Common myeloid progenitor, CD34-positive (primary cell): ENCODE measurements at regions of chr1 and their contacts with region 1.

Region 1: DNA sequence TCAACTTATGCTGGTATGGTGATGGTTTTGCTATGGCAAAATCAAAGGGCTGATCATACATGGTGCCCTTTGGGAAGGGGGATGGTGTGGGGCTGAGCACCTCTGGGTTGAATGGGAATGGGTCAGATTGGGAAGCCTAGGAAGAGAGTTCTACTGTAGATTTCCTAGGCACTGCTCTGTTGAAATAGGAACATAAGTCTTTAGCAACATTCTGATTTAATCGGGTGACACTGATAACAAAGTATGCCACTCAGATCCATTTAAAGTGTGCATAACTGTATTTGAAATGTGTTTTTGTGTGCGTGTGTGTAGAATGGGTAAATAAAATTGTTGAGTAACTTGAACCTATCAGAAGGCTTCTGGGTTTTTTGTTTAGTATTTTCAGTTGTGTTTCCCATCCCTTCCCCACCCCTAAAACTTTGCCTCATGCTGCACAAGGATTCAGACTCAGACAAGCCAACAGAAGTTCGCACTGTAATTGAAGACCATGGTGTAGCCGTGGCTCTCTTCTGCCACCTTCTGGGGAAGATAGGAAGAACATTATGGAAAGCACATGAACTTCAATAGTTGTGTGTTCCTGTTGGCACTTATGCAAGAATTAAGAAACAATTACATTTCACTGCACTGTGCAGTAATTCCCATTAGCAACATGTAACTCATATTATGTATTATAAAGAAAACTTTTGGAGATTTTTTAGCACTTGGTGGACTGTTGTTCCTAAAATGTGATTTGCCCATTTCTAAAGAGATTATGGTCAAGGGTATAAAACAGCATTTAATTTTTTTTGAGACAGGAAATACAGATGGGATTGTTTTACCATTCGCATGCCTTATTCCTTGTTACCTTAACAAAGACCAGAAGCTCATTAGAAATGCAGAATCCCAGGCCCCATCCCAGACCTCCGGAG is 10.9 kb upstream of the C4BPB start:
- DNase-seq: peak; percentile 77 to 90 (median 83)
- H3K4me3 ChIP-seq: no peak overlapping the region
- H3K27ac ChIP-seq: no peak overlapping the region
- H3K4me1 ChIP-seq: peaks cover under 1 to 4% (median 2%) of the 10 kb centered on the region in 4 experiments
- H3K27me3 ChIP-seq: no peaks in the 10 kb centered on the region

Region 2: GRCh38 chr1:207045466-207045865 is 32.3 kb before region 1 on chr1:
- CTCF ChIA-PET with region 1: interaction called, 22 read pairs
- POLR2A ChIA-PET with region 1: no interaction called
- DNase-seq: no peak
- H3K4me3 ChIP-seq: no peak overlapping the region
- H3K27ac ChIP-seq: no peak overlapping the region
- H3K4me1 ChIP-seq: peaks cover 0 to 12% (median 5%) of the 10 kb centered on the region in 4 experiments
- H3K27me3 ChIP-seq: no peaks in the 10 kb centered on the region

Region 3: GRCh38 chr1:207058878-207059867 is 18.6 kb before region 1 on chr1:
- CTCF ChIA-PET with region 1: interaction called, 20 read pairs
- POLR2A ChIA-PET with region 1: interaction called, 3 read pairs
- DNase-seq: peak in 2 of 3 donors; percentile 40 to 65
- H3K4me3 ChIP-seq: peak overlapping the region in 1 of 7 experiments; percentile 42
- H3K27ac ChIP-seq: no peak overlapping the region
- H3K4me1 ChIP-seq: peaks cover 21 to 40% (median 27%) of the 10 kb centered on the region in 4 experiments
- H3K27me3 ChIP-seq: no peaks in the 10 kb centered on the region

Region 4: DNA sequence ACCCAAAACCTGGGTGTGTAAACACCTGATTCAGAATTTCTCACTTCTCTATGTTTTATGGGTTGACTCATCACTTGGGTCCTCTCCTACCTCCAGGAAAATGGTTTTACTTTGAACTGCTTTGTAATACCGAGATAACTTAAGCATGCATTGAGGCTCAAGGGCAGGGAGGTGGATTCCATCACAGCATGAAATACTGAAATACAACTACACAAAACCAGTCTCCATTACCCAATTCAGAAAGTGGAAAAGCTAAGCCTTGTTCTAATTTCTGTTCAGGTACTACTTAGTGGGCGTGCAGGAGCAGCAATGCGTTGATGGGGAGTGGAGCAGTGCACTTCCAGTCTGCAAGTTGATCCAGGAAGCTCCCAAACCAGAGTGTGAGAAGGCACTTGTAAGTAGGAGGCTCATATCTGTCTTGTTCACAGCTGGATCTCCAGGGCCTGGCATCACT is 20.2 kb after region 1 on chr1:
- CTCF ChIA-PET with region 1: no interaction called
- POLR2A ChIA-PET with region 1: no interaction called
- DNase-seq: no peak
- H3K4me3 ChIP-seq: no peak overlapping the region
- H3K27ac ChIP-seq: no peak overlapping the region
- H3K4me1 ChIP-seq: no peaks in the 10 kb centered on the region
- H3K27me3 ChIP-seq: no peaks in the 10 kb centered on the region

Region 5: GRCh38 chr1:207134581-207134980 is 56.9 kb after region 1 on chr1:
- CTCF ChIA-PET with region 1: no interaction called
- POLR2A ChIA-PET with region 1: no interaction called
- DNase-seq: peak; percentile 34 to 82 (median 79)
- H3K4me3 ChIP-seq: no peak overlapping the region
- H3K27ac ChIP-seq: no peak overlapping the region
- H3K4me1 ChIP-seq: peaks cover 0 to 8% (median 0%) of the 10 kb centered on the region in 4 experiments
- H3K27me3 ChIP-seq: no peaks in the 10 kb centered on the region